AG04449 (cell line): ENCODE measurements at regions of chr9 and their contacts with region 1.

Region 1: DNA sequence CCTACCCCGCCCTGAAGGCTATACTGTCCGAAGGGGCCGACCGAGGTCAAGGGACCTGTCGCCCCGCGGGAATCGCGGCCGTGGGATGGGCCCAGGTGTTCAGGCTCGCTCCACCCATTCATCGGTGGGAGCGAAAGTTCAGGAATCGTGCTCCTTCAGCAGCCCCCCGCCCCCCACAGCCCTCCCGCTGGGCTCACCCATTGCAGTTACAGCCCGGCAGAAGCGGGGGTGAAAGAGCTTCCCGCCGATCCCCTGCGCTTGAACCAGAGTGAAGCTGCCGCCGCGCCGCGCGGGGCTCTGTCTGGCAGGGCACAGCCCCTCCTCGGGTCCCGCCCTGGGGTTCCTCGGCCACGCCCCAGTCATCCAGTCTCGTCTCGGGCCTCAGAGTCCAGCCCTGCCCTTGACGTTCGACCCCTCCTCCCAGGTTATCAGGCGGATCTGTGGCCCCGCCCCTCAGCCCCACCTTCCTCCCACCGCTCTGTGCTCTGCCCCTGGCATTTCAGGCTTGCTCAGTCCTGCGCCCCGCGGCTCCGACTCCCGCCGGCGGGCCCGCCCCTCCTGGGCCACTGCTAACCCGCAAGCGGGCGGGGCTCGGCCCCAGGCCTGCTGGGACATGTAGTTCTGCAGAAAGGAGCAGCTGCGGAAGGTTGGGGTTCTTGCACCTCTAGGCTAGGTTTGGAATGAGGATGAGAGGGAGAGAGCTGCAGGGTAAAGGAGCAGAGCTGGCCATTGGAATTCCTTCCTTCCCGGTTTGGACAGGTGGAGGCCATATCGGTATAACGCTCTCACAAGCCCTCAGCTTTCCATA is at the start of gene MYORG:
- DNase-seq: no peak
- H3K4me3 ChIP-seq: peak within 1 kb of the TSS; percentile 74
- CTCF ChIP-seq: no peak

Region 2: DNA sequence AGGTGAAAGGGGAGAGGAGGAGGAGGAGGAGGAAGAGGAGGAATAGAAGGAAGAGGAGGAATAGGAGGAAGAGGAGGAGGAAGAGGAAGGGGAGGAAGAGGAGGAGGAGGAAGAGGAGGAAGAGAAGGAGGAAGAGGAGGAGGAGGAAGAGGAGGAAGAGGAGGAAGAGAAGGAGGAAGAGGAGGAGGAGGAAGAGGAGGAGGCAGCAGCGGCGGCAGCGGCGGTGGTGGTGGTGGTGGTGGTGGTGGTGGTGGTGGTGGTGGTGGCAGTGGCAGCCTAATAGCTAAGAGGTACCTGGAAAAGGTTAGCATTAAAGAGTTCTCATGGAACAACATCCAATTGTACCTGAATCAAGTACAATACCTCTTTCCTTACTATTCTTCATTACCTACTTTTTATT is 360.7 kb before region 1 on chr9:
- CTCF ChIA-PET with region 1: no interaction called
- POLR2A ChIA-PET with region 1: no interaction called
- DNase-seq: no peak
- H3K4me3 ChIP-seq: no peak overlapping the region
- CTCF ChIP-seq: no peak

Region 3: DNA sequence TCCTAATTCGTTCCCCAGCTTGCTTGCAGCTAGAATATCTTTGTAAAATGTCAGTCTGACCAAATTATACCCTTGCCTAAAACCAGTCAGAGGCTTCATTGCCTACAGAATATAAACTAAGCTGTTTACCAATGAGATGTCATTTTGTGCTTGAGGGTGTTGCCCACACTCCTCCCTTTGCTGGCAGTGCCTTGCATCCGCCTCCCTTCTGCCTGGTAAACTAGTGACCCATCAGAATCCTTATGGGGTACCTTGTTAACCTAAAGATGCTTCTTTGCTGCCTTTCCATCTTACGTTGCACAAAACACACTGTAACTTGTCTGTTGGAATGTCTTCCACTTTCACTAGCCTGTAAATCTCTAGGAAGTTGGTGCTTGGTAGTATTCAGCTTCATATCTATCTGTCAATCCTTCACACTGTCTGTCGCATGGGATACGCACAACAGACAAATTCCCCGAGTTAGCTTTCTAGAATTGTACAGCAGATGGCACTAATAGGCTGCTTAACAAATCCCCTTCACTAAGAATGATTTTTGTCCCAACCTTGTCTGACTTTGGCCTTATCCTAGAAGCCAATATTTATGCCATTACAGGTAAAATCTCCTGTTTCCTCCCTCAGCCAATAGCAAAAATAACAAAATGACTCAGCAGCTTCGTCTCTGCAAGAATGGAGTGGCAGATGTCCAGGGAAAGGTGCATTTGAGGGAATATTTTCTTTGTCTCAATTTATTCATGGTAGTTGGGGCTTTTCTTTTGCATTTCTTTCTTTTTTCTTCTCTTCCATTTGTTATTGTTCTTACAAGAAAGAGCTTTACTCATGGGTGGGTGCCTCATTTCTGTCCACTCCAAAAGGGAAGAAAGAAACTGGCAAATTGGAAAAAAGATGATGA is 44.5 kb before region 1 on chr9:
- CTCF ChIA-PET with region 1: interaction called, 154 read pairs
- POLR2A ChIA-PET with region 1: no interaction called
- DNase-seq: no peak
- H3K4me3 ChIP-seq: no peak overlapping the region
- CTCF ChIP-seq: peak; percentile 35

Region 4: GRCh38 chr9:34363619-34364351 is 13.0 kb before region 1 on chr9:
- CTCF ChIA-PET with region 1: interaction called, 30 read pairs
- POLR2A ChIA-PET with region 1: no interaction called
- DNase-seq: no peak
- H3K4me3 ChIP-seq: no peak overlapping the region
- CTCF ChIP-seq: no peak

Region 5: GRCh38 chr9:34396276-34397214 is 19.7 kb after region 1 on chr9:
- CTCF ChIA-PET with region 1: interaction called, 28 read pairs
- POLR2A ChIA-PET with region 1: no interaction called
- DNase-seq: no peak
- H3K4me3 ChIP-seq: no peak overlapping the region
- CTCF ChIP-seq: no peak

Region 6: GRCh38 chr9:34440017-34440416 is 63.2 kb after region 1 on chr9:
- CTCF ChIA-PET with region 1: no interaction called
- POLR2A ChIA-PET with region 1: no interaction called
- DNase-seq: no peak
- H3K4me3 ChIP-seq: no peak overlapping the region
- CTCF ChIP-seq: no peak